ENCODE measurements at regions of chr17 and their contacts with region 1.

Region 1: DNA sequence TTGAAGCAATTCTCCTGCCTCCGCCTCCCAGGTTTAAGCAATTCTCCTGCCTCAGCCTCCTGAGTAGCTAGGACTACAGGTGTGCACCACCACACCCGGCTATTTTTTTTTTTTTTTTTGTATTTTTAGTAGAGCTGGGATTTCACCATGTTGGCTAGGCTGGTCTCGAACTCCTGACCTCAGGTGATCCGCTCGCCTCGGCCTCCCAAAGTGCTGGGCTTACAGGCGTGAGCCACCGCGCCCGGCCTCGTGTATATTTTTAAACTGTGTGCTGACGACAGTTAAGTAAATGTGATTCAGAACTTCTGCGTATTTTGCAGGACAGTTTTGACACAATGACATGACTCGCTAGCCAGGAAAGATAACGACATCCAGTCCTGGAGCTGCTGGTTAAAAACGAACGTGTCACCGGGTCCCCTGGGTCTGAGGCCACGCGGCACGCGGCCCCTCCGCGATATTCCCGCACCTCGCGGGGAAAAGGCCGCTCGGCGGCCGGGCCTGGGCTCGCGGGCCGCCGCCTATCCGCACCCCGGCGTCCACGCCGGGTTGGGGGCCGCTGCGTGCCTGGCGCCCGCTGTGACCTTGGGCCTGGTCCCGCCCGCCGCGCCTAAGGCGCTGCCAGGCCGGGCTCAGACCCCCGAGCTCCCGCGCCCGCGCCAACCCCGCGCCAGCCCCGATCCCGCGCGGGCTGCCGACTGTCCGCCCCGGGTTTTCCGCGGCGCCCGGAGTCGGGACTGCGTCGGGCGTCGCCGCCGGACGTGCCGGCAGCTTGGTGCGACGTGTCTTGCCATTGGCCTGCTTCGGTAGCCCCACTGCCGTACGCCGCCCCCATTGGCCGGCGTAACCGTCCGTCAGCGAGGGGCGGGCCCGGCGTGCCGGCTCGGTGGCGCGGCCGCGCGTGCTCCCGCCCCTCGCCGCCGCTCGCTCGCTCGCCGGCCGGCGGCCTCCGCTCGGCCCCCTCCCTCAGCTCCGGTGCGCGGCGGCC is at the start of gene FOXK2:
- DNase-seq: peak; percentile 99
- H3K4me3 ChIP-seq: peak within 1 kb of the TSS; percentile 84
- H3K27ac ChIP-seq: peak within 1 kb of the TSS; percentile 67
- H3K4me1 ChIP-seq: peaks cover 39% of the 10 kb centered on the region
- CTCF ChIP-seq: no peak
- total RNA-seq, gene FOXK2: 62.4 and 76.2 TPM in 2 replicates

Region 2: GRCh38 chr17:82457997-82458864 is 60.9 kb before region 1 on chr17 and contains the start of gene NARF:
- CTCF ChIA-PET with region 1: no interaction called
- POLR2A ChIA-PET with region 1: no interaction called
- intact Hi-C with region 1: loop called (anchors 2 kb)
- DNase-seq: peak; percentile 100
- H3K4me3 ChIP-seq: peak within 1 kb of the TSS; percentile 75
- H3K27ac ChIP-seq: peak within 1 kb of the TSS; percentile 89
- H3K4me1 ChIP-seq: peaks cover 18% of the 10 kb centered on the region
- CTCF ChIP-seq: no peak
- total RNA-seq, gene NARF: 75.0 and 82.5 TPM in 2 replicates

Region 3: GRCh38 chr17:82611140-82612058 is 92.3 kb after region 1 on chr17:
- CTCF ChIA-PET with region 1: no interaction called
- POLR2A ChIA-PET with region 1: no interaction called
- intact Hi-C with region 1: no loop called
- DNase-seq: peak; percentile 32
- H3K4me3 ChIP-seq: no peak overlapping the region
- H3K27ac ChIP-seq: no peak overlapping the region
- H3K4me1 ChIP-seq: no peaks in the 10 kb centered on the region
- CTCF ChIP-seq: no peak